Activated CD8-positive, alpha-beta T cell treated with anti-CD3 and anti-CD28 coated beads for 36 hours (primary cell): ENCODE measurements at regions of chr22 and their contacts with region 1.

Region 1: DNA sequence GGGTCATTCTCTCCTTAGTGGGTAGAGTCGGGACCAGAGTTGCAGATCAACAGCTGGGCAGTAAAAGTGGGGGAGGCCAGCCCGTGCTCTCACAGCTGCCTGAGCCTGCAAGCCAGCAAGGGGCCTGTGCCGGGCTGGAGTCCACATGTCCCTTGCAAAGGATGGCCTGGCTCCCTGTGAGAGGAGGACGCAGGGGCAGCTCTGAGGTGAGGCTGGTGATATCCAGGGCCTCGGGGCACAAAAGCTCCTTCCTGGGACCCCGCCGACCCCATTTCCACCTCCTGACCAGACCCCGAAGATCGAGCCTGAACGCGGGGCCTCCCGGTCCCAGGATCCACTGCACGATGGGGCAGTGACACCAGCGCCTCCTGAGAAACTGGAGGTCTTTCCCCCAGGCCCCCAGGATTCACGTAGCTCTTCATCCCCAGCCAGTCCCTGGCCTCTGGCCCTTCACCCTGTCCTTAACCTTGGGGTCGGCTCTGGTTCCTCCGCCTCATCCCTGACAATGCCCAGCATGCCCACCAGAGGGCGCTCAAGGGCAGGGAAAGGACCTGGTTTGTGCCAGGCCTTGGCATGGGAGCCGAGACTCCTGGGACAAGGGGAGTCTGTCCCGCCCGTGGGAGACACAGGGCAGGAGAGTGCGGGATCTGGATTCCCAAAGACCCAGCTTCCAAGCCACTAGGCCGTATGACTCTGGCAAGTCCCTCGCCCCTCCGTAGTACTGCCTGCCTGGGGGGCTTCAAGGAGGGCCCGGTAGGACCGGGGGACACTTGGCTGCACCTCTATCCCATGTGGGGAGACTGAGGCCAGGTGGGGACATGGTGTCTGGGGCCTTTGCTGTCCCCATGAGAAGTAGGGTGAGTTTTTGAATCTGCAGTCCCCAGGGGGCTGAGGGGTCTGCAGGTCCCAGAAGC is 17.8 kb upstream of the WNT7B start:
- DNase-seq: peak; percentile 83
- ATAC-seq: peak; percentile 81
- H3K4me3 Mint-ChIP-seq: no peak overlapping the region
- H3K27ac Mint-ChIP-seq: no peak overlapping the region
- H3K4me1 Mint-ChIP-seq: no peaks in the 10 kb centered on the region
- H3K27me3 Mint-ChIP-seq: peaks cover 2% of the 10 kb centered on the region
- CTCF ChIP-seq: peak; percentile 96

Region 2: GRCh38 chr22:45948081-45948648 is 46.6 kb before region 1 on chr22:
- CTCF ChIA-PET with region 1: no interaction called
- POLR2A ChIA-PET with region 1: no interaction called
- intact Hi-C with region 1: no loop called
- DNase-seq: no peak
- ATAC-seq: no peak
- H3K4me3 Mint-ChIP-seq: no peak overlapping the region
- H3K27ac Mint-ChIP-seq: no peak overlapping the region
- H3K4me1 Mint-ChIP-seq: no peaks in the 10 kb centered on the region
- H3K27me3 Mint-ChIP-seq: peaks cover 7% of the 10 kb centered on the region
- CTCF ChIP-seq: no peak

Region 3: GRCh38 chr22:46019351-46019750 is 24.6 kb after region 1 on chr22:
- CTCF ChIA-PET with region 1: interaction called, 19 read pairs
- POLR2A ChIA-PET with region 1: interaction called, 3 read pairs
- intact Hi-C with region 1: no loop called
- DNase-seq: no peak
- ATAC-seq: no peak
- H3K4me3 Mint-ChIP-seq: no peak overlapping the region
- H3K27ac Mint-ChIP-seq: no peak overlapping the region
- H3K4me1 Mint-ChIP-seq: no peaks in the 10 kb centered on the region
- H3K27me3 Mint-ChIP-seq: no peaks in the 10 kb centered on the region
- CTCF ChIP-seq: no peak